Activated CD4-positive, alpha-beta T cell treated with anti-CD3 and anti-CD28 coated beads for 36 hours (primary cell): ENCODE measurements at regions of chr20 and their contacts with region 1.

Region 1: DNA sequence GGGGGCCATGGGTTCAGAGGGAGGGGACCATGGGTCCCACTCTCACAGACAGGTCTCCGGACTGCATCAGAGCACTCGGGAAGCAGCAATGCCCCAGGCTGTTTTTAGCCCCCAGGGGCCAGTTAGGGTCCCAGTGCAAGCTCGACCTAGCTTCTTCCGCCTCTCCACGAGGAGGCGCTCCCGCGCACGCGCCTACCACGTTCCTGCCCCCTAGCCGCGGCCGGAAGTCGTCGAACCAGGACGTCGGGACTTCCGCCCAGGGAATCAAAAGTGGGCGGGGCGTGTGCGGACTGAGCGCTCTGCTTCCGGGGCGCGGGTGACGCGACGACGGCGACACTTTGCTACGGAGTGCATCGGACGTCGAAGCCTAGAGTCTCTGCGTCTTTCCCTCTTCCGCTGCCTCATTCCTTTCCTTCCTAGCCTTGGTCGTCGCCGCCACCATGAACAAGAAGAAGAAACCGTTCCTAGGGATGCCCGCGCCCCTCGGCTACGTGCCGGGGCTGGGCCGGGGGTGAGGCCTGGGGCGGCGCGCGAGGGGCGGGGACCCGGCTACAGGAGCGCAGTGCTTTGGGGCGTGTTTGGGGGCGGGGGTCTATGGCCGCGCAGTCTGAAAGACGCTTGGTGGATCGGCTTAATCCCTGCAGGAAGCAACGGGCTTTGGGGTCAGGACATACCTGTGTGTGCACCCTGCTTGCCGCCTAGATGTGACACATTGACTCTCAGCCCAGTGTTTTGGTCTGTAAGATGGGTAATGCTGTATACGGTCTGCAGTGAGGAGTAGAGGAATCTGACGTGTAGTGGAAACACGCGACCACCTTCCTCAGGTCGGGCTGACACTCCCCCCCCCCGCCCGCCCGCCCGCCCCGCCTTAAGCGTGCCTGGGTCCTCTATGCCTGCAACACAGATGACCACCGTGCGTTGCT is at the start of gene PRPF6:
- DNase-seq: peak; percentile 98
- ATAC-seq: peak; percentile 47
- H3K4me3 Mint-ChIP-seq: peak within 1 kb of the TSS; percentile 97
- H3K27ac Mint-ChIP-seq: peak within 1 kb of the TSS; percentile 98
- H3K4me1 Mint-ChIP-seq: peaks cover 59% of the 10 kb centered on the region
- H3K27me3 Mint-ChIP-seq: no peaks in the 10 kb centered on the region
- total RNA-seq, gene PRPF6: 60.5 to 67.0 TPM

Region 2: GRCh38 chr20:63635431-63636141 is 345.5 kb before region 1 on chr20:
- CTCF ChIA-PET with region 1: no interaction called
- POLR2A ChIA-PET with region 1: no interaction called
- intact Hi-C with region 1: loop called in 1 of 2 experiments (anchors 2 kb)
- DNase-seq: peak; percentile 88
- ATAC-seq: peak; percentile 77
- H3K4me3 Mint-ChIP-seq: peak overlapping the region; percentile 35
- H3K27ac Mint-ChIP-seq: peak overlapping the region; percentile 84
- H3K4me1 Mint-ChIP-seq: peaks cover 69% of the 10 kb centered on the region
- H3K27me3 Mint-ChIP-seq: no peaks in the 10 kb centered on the region

Region 3: DNA sequence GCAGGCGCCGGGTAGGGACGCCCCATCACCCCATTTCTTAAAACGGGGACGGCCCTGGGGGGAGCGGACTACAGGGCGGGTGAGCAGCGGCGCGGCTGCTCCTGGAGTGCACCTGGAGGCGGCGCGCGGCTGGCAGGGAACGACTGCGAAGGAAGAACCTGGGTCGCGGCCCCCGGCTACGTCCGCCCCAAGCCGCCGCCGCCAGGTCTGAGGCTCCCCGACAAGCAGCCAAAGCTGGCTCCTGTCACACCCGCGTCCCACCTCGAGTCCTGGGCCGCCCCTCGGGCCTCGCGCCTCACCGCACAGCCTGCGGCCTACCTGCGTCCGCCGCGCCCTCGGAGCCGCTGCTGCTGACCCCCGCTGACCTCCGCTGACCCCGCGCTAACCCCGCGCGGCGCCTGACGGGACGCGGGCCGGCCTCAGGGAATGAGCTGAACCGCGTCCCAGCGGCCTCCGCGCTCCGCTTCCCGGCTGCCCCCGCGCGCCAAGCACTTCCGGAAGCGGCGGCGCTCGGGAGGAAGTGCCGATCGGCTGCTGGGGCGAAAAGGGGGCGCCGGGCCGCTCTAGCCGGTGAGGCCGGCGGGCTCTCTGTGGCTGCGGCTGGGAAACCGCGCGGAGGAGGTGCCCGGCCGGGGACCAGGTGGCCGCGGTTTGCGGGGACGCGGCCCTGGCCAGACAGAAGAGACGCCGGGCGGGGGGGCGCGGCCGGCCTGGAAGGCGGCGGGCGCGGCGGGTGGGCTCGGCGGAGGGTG is 273.3 kb before region 1 on chr20 and contains the starts of genes ARFRP1 and ZGPAT:
- CTCF ChIA-PET with region 1: no interaction called
- POLR2A ChIA-PET with region 1: no interaction called
- intact Hi-C with region 1: loop called in 1 of 2 experiments (anchors 2 kb)
- DNase-seq: peak; percentile 94
- ATAC-seq: peak; percentile 89
- H3K4me3 Mint-ChIP-seq: peak within 1 kb of the TSS; percentile 95
- H3K27ac Mint-ChIP-seq: peak within 1 kb of the TSS; percentile 90
- H3K4me1 Mint-ChIP-seq: peaks cover 44% of the 10 kb centered on the region
- H3K27me3 Mint-ChIP-seq: no peaks in the 10 kb centered on the region
- total RNA-seq, gene ARFRP1: 36.4 to 52.0 TPM
- total RNA-seq, gene ZGPAT: 15.3 to 21.9 TPM

Region 4: GRCh38 chr20:63795178-63795830 is 185.8 kb before region 1 on chr20:
- CTCF ChIA-PET with region 1: no interaction called
- POLR2A ChIA-PET with region 1: no interaction called
- intact Hi-C with region 1: no loop called
- DNase-seq: no peak
- ATAC-seq: no peak
- H3K4me3 Mint-ChIP-seq: no peak overlapping the region
- H3K27ac Mint-ChIP-seq: no peak overlapping the region
- H3K4me1 Mint-ChIP-seq: peaks cover 2% of the 10 kb centered on the region
- H3K27me3 Mint-ChIP-seq: peaks cover 2% of the 10 kb centered on the region

Region 5: GRCh38 chr20:64010711-64011237 is 29.7 kb after region 1 on chr20:
- CTCF ChIA-PET with region 1: no interaction called
- POLR2A ChIA-PET with region 1: interaction called, 3 read pairs
- intact Hi-C with region 1: loop called in 1 of 2 experiments (anchors 1 kb)
- DNase-seq: no peak
- ATAC-seq: peak; percentile 33
- H3K4me3 Mint-ChIP-seq: no peak overlapping the region
- H3K27ac Mint-ChIP-seq: peak overlapping the region; percentile 83
- H3K4me1 Mint-ChIP-seq: peaks cover 32% of the 10 kb centered on the region
- H3K27me3 Mint-ChIP-seq: no peaks in the 10 kb centered on the region

Region 6: DNA sequence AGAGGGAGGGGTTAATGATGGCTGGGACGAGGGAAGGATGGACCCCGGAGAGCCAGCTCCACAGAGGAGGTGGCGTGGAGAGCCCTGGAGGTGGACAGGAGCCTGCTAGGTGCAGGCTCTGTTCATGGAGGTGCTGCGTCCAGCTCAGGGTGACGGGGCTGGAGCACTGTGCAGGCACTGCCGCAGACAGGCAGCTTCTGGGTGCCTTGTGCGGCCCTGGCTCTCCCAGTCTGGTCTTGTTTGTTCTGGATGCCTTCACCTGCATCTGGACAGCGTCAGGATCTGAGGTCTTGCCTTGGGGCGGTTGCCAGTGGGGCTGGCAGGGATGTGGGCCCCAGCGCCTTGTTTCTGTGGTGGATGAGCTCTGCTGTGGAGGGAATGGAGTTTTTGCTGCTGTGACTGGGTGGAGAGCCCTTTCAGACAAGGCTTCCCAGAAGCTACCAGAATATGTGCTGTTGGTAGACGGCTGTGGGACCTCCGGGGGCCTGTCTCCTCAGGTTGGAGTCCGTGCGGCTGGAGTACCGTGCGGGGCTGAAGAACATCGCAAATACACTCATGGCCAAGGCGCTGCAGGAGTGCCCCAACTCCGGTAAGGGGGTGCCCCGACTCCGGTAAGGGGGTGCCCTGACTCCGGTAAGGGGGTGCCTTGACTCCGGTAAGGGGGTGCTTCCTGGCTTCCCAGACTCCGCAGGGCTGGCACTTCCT is 47.1 kb after region 1 on chr20:
- CTCF ChIA-PET with region 1: no interaction called
- POLR2A ChIA-PET with region 1: no interaction called
- intact Hi-C with region 1: no loop called
- DNase-seq: no peak
- ATAC-seq: no peak
- H3K4me3 Mint-ChIP-seq: no peak overlapping the region
- H3K27ac Mint-ChIP-seq: no peak overlapping the region
- H3K4me1 Mint-ChIP-seq: no peaks in the 10 kb centered on the region
- H3K27me3 Mint-ChIP-seq: no peaks in the 10 kb centered on the region

Region 7: DNA sequence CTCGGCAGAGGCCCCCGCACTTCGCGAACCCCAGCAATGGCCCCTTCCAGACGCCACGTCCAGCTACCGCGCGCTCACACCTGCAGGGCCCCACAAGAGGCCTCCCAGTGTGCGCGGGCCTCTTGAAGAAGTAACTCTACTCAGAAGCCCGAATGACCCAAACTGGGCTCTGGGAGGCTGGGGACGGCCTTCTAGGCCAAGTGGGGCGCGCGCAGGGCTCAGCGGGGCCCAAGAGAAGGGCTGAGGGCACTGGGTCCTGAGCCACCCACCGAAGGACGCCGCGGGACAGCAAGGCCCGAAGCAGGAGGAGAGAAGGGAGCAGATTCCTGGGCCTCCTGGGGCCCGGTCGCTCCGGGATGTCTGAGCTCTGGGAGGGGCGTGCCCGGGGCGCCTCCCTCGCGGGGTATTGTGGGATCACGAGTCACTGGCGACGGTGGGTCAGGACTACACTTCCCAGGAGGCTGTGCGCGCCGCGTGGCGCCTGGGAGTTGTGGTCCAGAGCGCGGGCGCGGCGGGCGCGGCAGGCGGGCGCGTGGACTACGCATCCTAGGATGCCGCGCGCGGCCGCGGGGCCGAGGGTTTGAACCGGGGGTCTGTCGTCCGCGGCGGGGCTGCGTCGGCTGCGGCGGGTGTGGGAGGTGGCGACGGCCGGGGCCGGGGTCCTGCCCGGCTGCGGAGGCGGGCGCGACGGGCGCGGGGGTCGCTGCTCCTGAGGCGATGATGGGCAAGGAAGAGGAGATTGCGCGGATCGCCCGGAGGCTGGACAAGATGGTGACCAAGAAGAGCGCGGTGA is 81.7 kb after region 1 on chr20 and contains the start of gene TCEA2:
- CTCF ChIA-PET with region 1: interaction called, 5 read pairs
- POLR2A ChIA-PET with region 1: no interaction called
- intact Hi-C with region 1: loop called (anchors 1 to 5 kb)
- DNase-seq: peak; percentile 98
- ATAC-seq: peak; percentile 83
- H3K4me3 Mint-ChIP-seq: peak within 1 kb of the TSS; percentile 82
- H3K27ac Mint-ChIP-seq: peak within 1 kb of the TSS; percentile 79
- H3K4me1 Mint-ChIP-seq: peaks cover 51% of the 10 kb centered on the region
- H3K27me3 Mint-ChIP-seq: no peaks in the 10 kb centered on the region
- total RNA-seq, gene TCEA2: 40.6 to 50.0 TPM

Region 8: GRCh38 chr20:64086801-64087200 is 105.7 kb after region 1 on chr20:
- CTCF ChIA-PET with region 1: no interaction called
- POLR2A ChIA-PET with region 1: no interaction called
- intact Hi-C with region 1: no loop called
- DNase-seq: no peak
- ATAC-seq: no peak
- H3K4me3 Mint-ChIP-seq: no peak overlapping the region
- H3K27ac Mint-ChIP-seq: no peak overlapping the region
- H3K4me1 Mint-ChIP-seq: peaks cover 18% of the 10 kb centered on the region
- H3K27me3 Mint-ChIP-seq: peaks cover 4% of the 10 kb centered on the region

Region 9: DNA sequence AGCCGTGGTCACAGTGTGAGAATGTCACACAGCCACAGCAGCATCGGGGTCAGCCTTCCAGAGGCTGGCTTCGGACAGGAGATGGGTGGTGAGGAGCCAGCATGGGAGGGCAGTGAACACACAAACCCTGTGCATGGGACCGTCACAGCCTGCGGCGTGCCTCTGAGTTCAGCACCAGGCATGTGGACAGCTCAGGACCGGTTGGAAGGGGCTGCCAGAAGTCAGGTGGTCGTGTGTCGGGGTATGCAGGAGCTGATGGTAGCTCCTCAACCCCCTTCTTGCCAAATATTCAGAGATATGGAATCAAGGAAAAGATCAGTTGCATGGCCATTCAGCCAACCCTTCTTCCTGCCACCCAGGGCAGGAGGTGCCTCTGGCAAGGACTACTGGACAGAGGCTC is 211.3 kb after region 1 on chr20:
- CTCF ChIA-PET with region 1: no interaction called
- POLR2A ChIA-PET with region 1: no interaction called
- intact Hi-C with region 1: no loop called
- DNase-seq: no peak
- ATAC-seq: no peak
- H3K4me3 Mint-ChIP-seq: no peak overlapping the region
- H3K27ac Mint-ChIP-seq: no peak overlapping the region
- H3K4me1 Mint-ChIP-seq: no peaks in the 10 kb centered on the region
- H3K27me3 Mint-ChIP-seq: peaks cover 3% of the 10 kb centered on the region

Region 10: DNA sequence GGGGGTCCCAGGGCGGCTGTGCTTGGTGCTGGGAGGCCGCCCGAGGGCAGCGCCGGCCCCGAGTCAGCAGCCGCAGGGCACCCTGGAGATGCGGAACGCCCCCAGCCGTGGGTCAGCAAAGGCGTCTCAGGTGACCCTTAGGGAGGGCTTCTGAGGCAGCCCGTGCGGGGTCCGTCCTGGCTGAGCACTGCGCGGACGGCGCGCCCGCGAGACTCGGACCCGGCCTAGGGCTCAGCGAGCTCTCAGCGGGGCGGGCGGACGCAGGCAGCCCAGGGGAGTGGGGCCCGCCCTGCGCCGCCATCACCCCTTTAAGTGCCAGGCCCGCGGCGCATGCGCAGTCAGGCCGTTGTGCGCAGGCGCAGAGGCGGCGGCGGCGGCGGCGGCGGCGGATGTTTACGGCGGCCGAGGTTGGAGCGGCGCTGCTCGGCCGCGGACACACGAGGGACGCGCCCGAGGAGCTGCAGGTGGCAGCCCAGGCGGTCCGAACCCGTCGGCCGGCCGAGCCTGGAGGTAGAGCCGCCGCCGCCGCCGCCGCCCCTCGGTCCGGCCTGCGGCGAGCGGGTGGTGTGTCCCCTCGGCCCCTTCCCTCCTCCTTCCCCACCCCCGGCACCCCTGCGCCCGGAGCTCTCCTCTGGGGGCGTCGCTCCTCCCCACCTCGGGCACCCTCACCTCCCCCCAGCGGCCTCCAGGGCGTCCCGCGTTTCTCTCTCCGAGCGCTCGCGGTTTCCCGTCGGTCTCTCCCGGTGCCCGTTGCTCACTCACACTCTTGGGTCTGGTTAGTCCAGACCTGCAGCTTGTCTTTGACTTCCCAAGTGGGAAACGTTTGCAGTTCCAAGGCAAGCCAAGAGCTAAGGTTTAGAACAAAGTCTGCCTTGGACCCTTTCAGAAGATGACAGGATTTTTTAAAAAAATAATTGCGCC is 274.6 kb after region 1 on chr20 and contains the start of gene PCMTD2:
- CTCF ChIA-PET with region 1: no interaction called
- POLR2A ChIA-PET with region 1: no interaction called
- intact Hi-C with region 1: loop called in 1 of 2 experiments (anchors 5 kb)
- DNase-seq: peak; percentile 91
- ATAC-seq: peak; percentile 91
- H3K4me3 Mint-ChIP-seq: peak within 1 kb of the TSS; percentile 85
- H3K27ac Mint-ChIP-seq: peak within 1 kb of the TSS; percentile 92
- H3K4me1 Mint-ChIP-seq: peaks cover 46% of the 10 kb centered on the region
- H3K27me3 Mint-ChIP-seq: peaks cover 6% of the 10 kb centered on the region
- total RNA-seq, gene PCMTD2: 32.7 to 37.8 TPM